ENCODE measurements at regions of chr17 and their contacts with region 1.

Region 1: GRCh38 chr17:58112970-58113631 is 29.9 kb downstream of the DYNLL2 start:
- DNase-seq: peak; percentile 72
- CTCF ChIP-seq: peak; percentile 89

Region 2: GRCh38 chr17:57535249-57535966 is 577.7 kb before region 1 on chr17:
- in situ Hi-C with region 1: no loop called
- DNase-seq: no peak
- CTCF ChIP-seq: no peak

Region 3: DNA sequence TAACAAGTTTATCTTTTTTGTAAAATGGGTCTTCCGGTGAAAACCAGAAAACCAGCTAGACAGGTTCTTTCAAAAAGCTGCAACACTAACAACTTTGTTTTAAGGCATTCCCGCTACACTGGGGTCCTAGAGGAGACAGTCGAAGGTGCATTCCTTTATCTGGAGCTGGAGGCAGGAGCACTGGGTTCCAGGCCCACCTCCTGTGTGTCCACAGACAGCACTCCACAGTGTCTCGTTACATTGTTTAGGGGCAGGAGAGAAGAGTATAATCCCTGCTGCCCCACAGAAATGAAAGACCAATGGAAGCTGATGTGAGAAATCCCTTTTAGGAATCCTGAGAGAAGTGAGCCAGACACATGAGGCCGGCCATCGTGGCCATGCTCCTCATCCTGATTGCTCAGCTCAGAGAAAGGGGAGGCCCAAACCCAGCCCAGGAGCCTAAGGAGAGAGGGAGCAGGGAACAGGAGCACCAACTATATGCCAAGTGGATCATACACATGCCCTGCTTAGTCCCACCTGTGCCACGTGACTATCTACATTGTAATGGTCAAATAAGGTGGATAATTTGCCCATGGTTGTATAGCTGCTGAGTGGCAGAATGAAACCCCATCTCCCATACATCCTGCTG is 427.5 kb before region 1 on chr17:
- in situ Hi-C with region 1: no loop called
- DNase-seq: no peak
- CTCF ChIP-seq: no peak

Region 4: DNA sequence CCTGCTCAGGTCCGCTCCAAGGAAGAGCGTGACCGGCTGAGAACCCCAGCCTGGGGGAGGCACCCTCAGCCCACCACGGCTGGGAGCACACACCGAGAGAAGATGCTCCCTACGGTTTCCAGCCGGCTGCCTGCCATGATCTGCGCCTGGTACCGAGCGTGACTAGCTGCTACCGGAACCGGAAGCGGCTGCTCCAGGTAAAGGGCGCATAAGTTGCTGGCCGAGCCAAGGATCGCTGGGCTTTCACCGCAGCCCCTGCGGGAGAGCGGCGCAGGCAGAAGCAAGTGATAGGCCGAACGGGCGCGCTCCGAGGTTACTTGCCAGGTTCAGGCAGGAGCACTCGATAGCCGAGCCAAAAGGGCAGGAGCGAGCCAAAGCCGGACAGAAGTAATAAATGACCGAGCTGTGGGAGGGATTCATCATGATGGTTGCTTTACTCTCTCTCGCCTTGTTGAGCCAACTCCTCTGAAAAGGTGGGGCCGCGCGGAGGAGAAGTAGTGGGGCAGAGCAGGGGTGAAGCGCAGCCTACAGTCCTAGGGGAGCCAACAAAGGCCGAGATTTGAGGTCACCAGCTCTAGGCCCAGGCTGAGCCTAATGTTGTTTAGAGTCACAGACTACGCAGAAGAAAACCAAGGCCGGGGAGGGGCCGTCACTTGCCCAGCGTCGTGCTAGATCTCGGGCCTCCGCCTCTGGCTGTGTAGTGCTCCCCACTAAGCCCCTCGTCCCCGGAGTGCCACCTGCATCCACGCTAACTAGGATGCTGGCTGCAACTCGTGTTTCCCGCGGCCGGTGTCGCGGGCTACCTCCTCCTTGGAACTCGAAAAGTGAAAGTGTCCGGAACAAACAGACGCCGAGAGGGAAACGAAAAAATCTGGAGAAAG is 263.0 kb before region 1 on chr17 and contains the start of gene MRPS23:
- in situ Hi-C with region 1: loop called (anchors 10 kb)
- DNase-seq: peak; percentile 96
- CTCF ChIP-seq: no peak

Region 5: GRCh38 chr17:58210922-58211321 is 97.8 kb after region 1 on chr17:
- in situ Hi-C with region 1: no loop called
- DNase-seq: no peak
- CTCF ChIP-seq: peak; percentile 23

Region 6: GRCh38 chr17:58254803-58255388 is 141.8 kb after region 1 on chr17:
- in situ Hi-C with region 1: no loop called
- DNase-seq: no peak
- CTCF ChIP-seq: no peak

Measured in GM13976 (cell line).